ENCODE measurements at regions of chr12 and their contacts with region 1.

Region 1: DNA sequence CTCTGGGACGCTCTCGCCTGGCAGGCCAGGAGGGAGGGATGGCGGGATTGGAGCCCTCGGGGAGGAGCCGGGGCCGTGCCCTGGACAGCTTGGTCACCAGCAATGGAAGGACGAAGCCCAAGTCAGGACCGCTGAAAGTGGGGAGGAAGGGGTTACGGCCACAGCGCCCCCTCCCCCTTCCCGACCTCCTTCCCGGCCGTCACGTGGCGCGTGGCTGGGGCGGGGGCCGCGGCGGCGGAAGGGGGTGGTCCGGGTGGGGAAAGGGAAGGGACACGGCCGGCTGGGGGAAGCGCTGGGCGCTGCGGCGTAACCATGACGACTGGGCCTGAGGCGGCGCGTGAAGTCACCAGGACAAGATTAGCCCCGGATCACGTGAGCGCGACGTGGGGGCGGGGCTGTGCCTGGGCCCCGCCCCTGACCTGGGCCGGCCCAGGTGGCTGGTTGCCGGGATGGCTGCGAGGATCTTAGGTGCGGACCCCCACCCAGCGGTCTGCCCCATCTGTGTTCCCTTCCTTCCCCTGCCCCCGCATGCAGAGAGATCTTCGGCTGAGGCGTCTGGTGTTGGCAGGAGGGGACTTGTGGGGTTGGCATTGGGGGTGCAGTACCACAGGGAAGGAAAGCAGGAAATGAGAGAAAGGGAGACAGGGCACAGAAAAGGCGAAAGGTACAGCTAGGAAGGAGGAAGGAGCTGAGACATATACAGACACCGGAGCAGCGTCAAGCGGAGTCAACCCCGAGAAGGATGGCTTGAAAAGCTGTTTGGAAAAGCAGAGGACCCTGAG is 6.2 kb downstream of the MAP3K12 start:
- DNase-seq: peak; percentile 75
- H3K4me3 ChIP-seq: peak overlapping the region; percentile 47 to 69 (median 53)
- H3K27ac ChIP-seq: peak overlapping the region; percentile 22
- H3K4me1 ChIP-seq: peaks cover 10% of the 10 kb centered on the region
- H3K27me3 ChIP-seq: no peaks in the 10 kb centered on the region
- CTCF ChIP-seq: no peak

Region 2: DNA sequence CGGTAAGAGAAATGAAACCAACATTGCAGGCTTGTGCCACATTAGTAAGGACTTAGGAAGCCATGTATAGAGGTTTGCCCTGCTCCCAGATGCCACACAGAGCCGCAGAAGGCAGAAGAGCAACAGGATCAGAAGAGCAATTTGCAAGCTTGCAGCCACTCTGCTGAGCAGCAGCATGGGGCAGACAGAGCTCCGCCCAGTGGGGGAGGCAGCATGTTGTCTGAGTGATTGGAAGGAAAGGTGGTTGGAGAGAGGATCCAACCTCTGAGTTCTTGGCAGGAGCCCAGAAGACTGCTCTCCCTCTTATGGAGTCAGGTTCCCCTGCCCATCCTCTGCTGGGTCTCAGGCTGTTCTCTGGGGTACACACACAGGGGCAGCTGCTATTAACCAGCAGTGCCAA is 997.6 kb before region 1 on chr12:
- CTCF ChIA-PET with region 1: no interaction called
- dilution Hi-C with region 1: no loop called
- in situ Hi-C with region 1: no loop called
- intact Hi-C with region 1: no loop called
- DNase-seq: peak; percentile 72
- H3K4me3 ChIP-seq: no peak overlapping the region
- H3K27ac ChIP-seq: peak overlapping the region; percentile 99
- H3K4me1 ChIP-seq: peaks cover 69% of the 10 kb centered on the region
- H3K27me3 ChIP-seq: no peaks in the 10 kb centered on the region
- CTCF ChIP-seq: peak in 1 of 2 donors; percentile 31

Region 3: DNA sequence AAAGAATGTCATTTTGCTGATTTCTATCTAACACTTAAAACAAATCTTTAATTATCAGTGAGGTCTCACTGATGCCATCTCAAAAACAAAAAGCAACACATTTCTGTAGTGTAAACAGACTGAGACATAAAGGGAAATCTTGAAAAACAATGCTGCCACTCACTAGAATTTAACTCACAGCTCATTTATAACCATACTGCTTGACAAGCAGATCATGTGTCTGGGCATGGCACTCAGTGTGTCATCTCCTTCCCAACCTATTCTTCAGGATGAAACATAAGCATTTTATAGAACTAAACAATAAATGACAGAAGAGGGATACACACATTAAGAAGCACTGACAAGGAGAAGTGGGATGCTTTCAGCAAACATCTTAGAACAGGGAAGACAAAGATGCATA is 110.8 kb after region 1 on chr12:
- CTCF ChIA-PET with region 1: interaction called, 11 read pairs
- dilution Hi-C with region 1: no loop called
- in situ Hi-C with region 1: no loop called
- intact Hi-C with region 1: no loop called
- DNase-seq: no peak
- H3K4me3 ChIP-seq: no peak overlapping the region
- H3K27ac ChIP-seq: no peak overlapping the region
- H3K4me1 ChIP-seq: peaks cover 12% of the 10 kb centered on the region
- H3K27me3 ChIP-seq: no peaks in the 10 kb centered on the region
- CTCF ChIP-seq: no peak